ENCODE measurements at regions of chr1 and their contacts with region 1.

Region 1: GRCh38 chr1:55284852-55285251 is 69.7 kb upstream of the USP24 start:
- DNase-seq: no peak
- H3K4me3 ChIP-seq: no peak overlapping the region
- CTCF ChIP-seq: peak; percentile 53

Region 2: GRCh38 chr1:54973205-54973921 is 311.5 kb before region 1 on chr1:
- CTCF ChIA-PET with region 1: no interaction called
- POLR2A ChIA-PET with region 1: no interaction called
- DNase-seq: no peak
- H3K4me3 ChIP-seq: no peak overlapping the region
- CTCF ChIP-seq: peak; percentile 53

Region 3: GRCh38 chr1:56578963-56579875 is 1294.4 kb after region 1 on chr1 and contains the start of gene PLPP3:
- CTCF ChIA-PET with region 1: interaction called, 230 read pairs
- POLR2A ChIA-PET with region 1: no interaction called
- DNase-seq: peak; percentile 71
- H3K4me3 ChIP-seq: peak within 1 kb of the TSS; percentile 89
- CTCF ChIP-seq: peak; percentile 63

Measured in AG04449 (cell line).